PC-3 (cell line): ENCODE measurements at regions of chr18 and their contacts with region 1.

Region 1: GRCh38 chr18:73136134-73136533 is 268.3 kb upstream of the NETO1 start:
- DNase-seq: peak; percentile 67
- ATAC-seq: peak; percentile 64
- H3K4me3 ChIP-seq: no peak overlapping the region
- H3K27ac ChIP-seq: no peak overlapping the region
- H3K4me1 ChIP-seq: no peaks in the 10 kb centered on the region
- H3K27me3 ChIP-seq: no peaks in the 10 kb centered on the region
- CTCF ChIP-seq: peak; percentile 81

Region 2: DNA sequence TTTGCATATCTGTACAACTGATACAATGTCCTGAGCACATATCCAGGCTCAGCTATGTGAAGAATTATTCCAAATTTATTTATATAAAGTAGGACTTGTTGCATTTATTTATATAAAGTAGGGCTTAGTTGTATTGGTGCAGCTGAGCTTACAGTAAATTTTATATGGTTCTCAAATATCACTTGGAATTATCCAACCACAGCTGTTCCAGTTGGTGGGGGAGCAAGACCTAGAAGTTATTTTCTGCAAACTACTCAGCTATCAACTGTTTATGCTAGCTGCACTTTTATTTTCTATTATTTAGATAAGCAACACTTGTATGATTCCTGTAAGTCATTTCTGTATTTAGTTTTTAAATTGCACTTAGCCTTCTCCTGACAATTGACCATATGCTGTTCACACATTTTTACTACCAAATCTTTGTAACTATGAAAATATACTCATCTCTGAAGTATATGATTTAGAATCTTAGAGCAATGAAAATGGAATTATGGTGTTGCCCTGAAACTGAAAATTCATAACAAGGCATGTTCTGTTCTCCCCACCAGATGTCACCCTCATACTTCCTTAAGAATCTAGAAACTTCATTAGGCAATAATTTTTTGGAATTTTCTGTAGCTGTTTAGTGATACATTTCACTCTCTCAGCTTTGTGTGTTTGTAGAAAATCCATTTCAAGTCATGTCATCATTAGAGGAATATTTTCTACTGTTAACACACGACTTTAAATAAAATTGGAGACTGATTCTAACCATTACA is 435.0 kb before region 1 on chr18:
- CTCF ChIA-PET with region 1: no interaction called
- POLR2A ChIA-PET with region 1: no interaction called
- intact Hi-C with region 1: loop called (anchors 1 kb)
- DNase-seq: peak; percentile 63
- ATAC-seq: peak; percentile 46; the same call in 1 of the 2 replicates
- H3K4me3 ChIP-seq: no peak overlapping the region
- H3K27ac ChIP-seq: no peak overlapping the region
- H3K4me1 ChIP-seq: no peaks in the 10 kb centered on the region
- H3K27me3 ChIP-seq: no peaks in the 10 kb centered on the region
- CTCF ChIP-seq: peak; percentile 77

Region 3: GRCh38 chr18:72762515-72763122 is 373.5 kb before region 1 on chr18:
- CTCF ChIA-PET with region 1: interaction called, 3 read pairs
- POLR2A ChIA-PET with region 1: no interaction called
- intact Hi-C with region 1: loop called (anchors 1 kb)
- DNase-seq: peak; percentile 84
- ATAC-seq: peak; percentile 61
- H3K4me3 ChIP-seq: no peak overlapping the region
- H3K27ac ChIP-seq: no peak overlapping the region
- H3K4me1 ChIP-seq: no peaks in the 10 kb centered on the region
- H3K27me3 ChIP-seq: no peaks in the 10 kb centered on the region
- CTCF ChIP-seq: peak; percentile 83

Region 4: GRCh38 chr18:72819050-72819449 is 317.1 kb before region 1 on chr18:
- CTCF ChIA-PET with region 1: interaction called, 5 read pairs
- POLR2A ChIA-PET with region 1: no interaction called
- intact Hi-C with region 1: loop called (anchors 5 kb)
- DNase-seq: peak; percentile 11
- ATAC-seq: peak; percentile 58
- H3K4me3 ChIP-seq: no peak overlapping the region
- H3K27ac ChIP-seq: no peak overlapping the region
- H3K4me1 ChIP-seq: no peaks in the 10 kb centered on the region
- H3K27me3 ChIP-seq: no peaks in the 10 kb centered on the region
- CTCF ChIP-seq: peak; percentile 53; the same call in 1 of the 2 replicates

Region 5: DNA sequence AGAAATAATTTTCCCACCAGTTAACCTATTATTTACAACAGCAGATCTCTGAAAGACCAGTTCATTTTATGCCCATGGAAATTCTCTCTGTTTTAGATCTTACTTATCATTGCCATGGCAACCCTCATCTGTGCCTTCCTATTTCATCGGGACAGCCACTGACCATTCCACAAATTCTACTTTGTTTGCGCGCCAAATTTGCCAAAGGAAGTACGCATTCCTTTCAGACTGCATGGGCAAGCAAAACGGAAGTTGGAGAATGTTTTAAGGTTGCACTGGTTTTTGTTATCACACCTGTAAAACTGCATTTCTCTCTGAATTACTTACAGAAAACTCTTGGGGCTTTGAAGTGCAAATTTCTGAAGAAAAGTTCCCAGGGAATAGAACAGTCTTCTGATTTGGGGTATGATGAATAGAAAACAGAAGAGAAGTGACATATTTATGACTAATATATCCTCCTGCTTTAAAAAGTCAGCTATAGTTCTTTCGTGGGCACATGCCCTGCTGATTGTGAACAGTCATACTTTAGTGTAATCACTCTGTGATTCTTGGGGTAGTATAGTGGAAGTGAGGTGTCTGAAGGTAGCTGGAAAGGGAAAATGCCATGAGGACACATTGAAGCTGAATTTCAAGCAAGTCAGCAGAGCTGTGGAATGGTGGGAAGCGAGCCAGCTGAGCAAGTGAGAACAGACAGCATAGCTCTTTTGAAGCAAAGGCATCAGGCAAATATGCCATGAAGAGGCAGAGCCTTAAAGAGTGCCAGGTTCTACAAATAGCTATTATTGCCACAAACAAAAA is 289.2 kb before region 1 on chr18:
- CTCF ChIA-PET with region 1: no interaction called
- POLR2A ChIA-PET with region 1: no interaction called
- intact Hi-C with region 1: loop called (anchors 10 kb)
- DNase-seq: peak; percentile 58
- ATAC-seq: peak; percentile 48
- H3K4me3 ChIP-seq: no peak overlapping the region
- H3K27ac ChIP-seq: peak overlapping the region; percentile 76
- H3K4me1 ChIP-seq: peaks cover 36% of the 10 kb centered on the region
- H3K27me3 ChIP-seq: no peaks in the 10 kb centered on the region
- CTCF ChIP-seq: no peak

Region 6: DNA sequence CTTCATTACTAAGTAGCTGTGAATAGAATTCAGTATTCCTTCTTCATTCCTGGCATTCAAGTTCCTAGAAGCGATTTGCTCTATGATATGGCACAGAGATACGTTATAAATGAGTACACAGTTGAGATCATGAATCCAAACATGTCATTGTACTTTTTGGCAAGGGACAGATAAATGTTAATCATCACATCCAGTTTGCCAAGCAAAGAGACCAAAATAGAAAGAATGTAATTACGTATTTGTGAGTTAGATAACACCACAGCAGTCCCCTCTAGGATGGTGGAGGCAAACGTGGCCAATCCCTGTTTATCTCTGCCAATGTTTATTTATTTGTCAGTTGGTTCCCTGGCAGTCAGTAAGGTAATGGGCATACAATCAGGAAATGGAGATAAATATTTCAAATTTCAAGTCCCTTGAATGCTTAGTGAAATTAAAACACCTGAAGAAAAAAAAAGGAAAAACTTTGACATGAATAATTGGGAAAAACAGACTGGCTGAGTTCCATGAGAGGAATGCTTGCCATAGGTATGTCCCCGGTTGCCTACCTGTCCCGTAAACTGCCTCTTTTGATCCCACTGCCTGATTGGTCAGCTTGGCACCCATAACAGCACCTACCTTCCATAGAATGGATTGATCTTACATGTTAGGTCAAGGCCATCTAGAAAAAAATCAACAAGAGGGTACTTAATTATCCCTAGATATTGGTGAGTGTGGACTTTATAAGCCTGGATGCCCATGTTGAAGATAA is 182.8 kb after region 1 on chr18:
- CTCF ChIA-PET with region 1: no interaction called
- POLR2A ChIA-PET with region 1: no interaction called
- intact Hi-C with region 1: loop called (anchors 2 kb)
- DNase-seq: peak; percentile 91
- ATAC-seq: peak; percentile 89
- H3K4me3 ChIP-seq: peak overlapping the region; percentile 29; the same call in 1 of the 2 replicates
- H3K27ac ChIP-seq: peak overlapping the region; percentile 87
- H3K4me1 ChIP-seq: peaks cover 49% of the 10 kb centered on the region
- H3K27me3 ChIP-seq: no peaks in the 10 kb centered on the region
- CTCF ChIP-seq: no peak

Region 7: GRCh38 chr18:73431620-73432019 is 295.5 kb after region 1 on chr18:
- CTCF ChIA-PET with region 1: no interaction called
- POLR2A ChIA-PET with region 1: no interaction called
- intact Hi-C with region 1: no loop called
- DNase-seq: no peak
- ATAC-seq: no peak
- H3K4me3 ChIP-seq: no peak overlapping the region
- H3K27ac ChIP-seq: no peak overlapping the region
- H3K4me1 ChIP-seq: no peaks in the 10 kb centered on the region
- H3K27me3 ChIP-seq: no peaks in the 10 kb centered on the region
- CTCF ChIP-seq: no peak